ENCODE measurements at regions of chr6 and their contacts with region 1.

Region 1: DNA sequence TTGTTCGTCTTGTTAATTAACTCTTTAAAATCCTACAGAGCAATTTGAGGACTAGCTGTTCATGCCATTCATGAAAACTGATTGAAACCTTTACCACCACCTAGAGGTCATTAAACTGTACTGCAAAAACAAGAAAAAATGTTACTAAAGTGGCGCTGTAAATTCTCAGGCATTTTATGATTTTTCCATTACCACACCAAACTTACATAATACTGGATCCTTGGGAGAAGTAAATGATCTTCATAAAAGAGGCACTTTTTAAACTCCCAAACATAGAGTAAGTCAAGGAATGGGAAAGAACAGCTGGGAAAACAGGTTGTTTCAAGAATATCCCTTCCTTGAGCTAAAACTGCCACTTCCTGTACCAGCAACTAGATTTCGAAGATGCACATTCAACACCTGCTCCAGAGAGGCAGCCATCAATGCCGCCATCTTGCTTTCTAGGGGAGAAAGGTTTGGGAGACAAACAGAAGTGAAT is 54.3 kb downstream of the MYLIP start:
- DNase-seq: no peak
- H3K4me3 Mint-ChIP-seq: no peak overlapping the region
- H3K27ac Mint-ChIP-seq: peak overlapping the region; percentile 63
- H3K4me1 Mint-ChIP-seq: peaks cover 43% of the 10 kb centered on the region
- H3K27me3 Mint-ChIP-seq: peaks cover 6% of the 10 kb centered on the region

Region 2: DNA sequence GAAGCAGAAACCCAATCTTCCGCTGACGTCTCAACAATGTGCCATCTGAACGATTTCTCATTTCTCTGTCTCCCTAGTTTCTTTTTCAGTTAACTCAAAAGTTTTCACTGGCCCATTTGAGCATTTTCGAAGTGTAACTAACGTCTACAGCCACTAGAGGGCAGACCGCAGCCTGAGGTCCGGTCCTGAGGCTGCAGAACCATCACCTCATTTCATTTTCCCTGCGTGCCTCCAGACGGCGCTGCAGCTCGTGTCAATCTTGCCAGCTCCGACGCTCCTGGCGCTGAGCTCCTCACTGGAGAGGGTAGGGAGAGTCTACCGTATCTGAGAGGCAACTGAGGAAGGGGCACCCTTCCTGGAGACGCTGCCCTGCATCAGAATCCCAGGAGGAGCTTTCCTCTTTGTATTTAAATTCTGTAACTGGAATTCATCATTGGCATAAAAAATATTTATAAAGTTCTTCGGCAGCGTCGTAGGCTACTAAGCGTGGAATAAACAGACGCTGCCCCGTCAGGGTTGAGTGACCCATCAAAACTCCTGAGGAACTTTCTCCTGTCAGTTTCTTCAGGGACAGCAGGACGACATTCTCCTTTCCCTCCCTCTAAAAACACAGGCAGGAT is 491.9 kb before region 1 on chr6:
- CTCF ChIA-PET with region 1: interaction called, 14 read pairs
- POLR2A ChIA-PET with region 1: no interaction called
- DNase-seq: peak; percentile 84
- H3K4me3 Mint-ChIP-seq: no peak overlapping the region
- H3K27ac Mint-ChIP-seq: no peak overlapping the region
- H3K4me1 Mint-ChIP-seq: peaks cover 12% of the 10 kb centered on the region
- H3K27me3 Mint-ChIP-seq: no peaks in the 10 kb centered on the region

Region 3: GRCh38 chr6:16128759-16129622 is 54.2 kb before region 1 on chr6 and contains the start of gene MYLIP:
- CTCF ChIA-PET with region 1: interaction called, 14 read pairs
- POLR2A ChIA-PET with region 1: interaction called, 8 read pairs
- DNase-seq: peak; percentile 96
- H3K4me3 Mint-ChIP-seq: peak within 1 kb of the TSS; percentile 97
- H3K27ac Mint-ChIP-seq: peak within 1 kb of the TSS; percentile 95
- H3K4me1 Mint-ChIP-seq: peaks cover 42% of the 10 kb centered on the region
- H3K27me3 Mint-ChIP-seq: peaks cover 5% of the 10 kb centered on the region
- total RNA-seq, gene MYLIP: 16.9 to 18.1 TPM

Measured in activated CD4-positive, alpha-beta T cell treated with anti-CD3 and anti-CD28 coated beads, Interleukin-2, amount 10 ng/mL, durations not matched to agents 7 days and 5 days (primary cell).